Activated CD4-positive, alpha-beta memory T cell treated with anti-CD3 and anti-CD28 coated beads for 36 hours (primary cell): ENCODE measurements at regions of chr12 and their contacts with region 1.

Region 1: DNA sequence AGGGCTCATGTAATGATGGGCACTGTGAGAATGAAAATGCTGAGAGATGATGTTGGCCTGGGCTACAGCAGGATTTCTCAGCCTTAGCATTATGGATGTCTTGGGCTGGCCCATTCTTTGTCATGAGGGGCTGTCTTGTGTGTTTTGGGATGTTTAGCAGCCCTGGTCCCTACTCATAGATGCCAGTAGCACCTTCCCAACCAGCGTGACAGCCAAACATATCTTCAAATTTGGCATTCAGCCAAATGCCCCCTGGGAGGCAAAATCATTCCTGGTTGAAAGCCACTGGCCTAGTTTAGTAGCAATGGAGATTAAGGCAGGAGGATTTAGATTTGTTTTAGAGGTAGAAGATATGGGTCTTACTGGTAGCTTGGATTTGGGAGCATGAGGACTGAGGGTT is 26.6 kb downstream of the UBE3B start:
- DNase-seq: no peak
- H3K4me3 Mint-ChIP-seq: no peak overlapping the region
- H3K27ac Mint-ChIP-seq: no peak overlapping the region
- H3K4me1 Mint-ChIP-seq: no peaks in the 10 kb centered on the region
- H3K27me3 Mint-ChIP-seq: no peaks in the 10 kb centered on the region

Region 2: DNA sequence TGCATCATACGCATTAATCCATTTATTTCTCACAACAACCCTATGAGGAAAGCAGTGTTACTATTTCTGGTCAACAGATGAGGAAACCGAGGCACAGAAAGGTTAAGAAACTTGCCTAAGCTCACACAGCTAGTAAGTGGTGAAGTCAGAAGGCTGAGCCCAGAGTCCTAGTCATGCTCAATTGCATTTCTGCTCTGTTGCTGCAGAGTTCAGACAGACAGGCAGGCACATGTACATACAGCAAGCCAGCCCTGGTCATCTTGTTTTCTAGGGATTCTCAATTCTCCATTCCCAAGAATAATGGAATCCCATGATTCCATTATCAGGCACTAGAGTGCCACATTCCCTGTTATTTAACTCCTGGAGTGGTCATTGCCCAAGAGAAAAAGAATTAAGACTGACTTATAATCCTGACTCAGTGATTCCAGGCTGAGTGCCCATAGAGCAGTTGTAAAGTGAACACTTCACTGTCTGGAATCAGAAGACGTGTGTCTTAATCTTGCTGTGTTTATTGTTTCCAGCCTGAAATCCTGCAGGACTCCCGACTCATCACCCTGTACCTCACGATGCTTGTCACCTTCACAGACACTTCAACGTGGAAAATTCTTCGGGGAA is 15.9 kb before region 1 on chr12:
- CTCF ChIA-PET with region 1: no interaction called
- POLR2A ChIA-PET with region 1: no interaction called
- intact Hi-C with region 1: no loop called
- DNase-seq: no peak
- H3K4me3 Mint-ChIP-seq: no peak overlapping the region
- H3K27ac Mint-ChIP-seq: no peak overlapping the region
- H3K4me1 Mint-ChIP-seq: no peaks in the 10 kb centered on the region
- H3K27me3 Mint-ChIP-seq: no peaks in the 10 kb centered on the region

Region 3: DNA sequence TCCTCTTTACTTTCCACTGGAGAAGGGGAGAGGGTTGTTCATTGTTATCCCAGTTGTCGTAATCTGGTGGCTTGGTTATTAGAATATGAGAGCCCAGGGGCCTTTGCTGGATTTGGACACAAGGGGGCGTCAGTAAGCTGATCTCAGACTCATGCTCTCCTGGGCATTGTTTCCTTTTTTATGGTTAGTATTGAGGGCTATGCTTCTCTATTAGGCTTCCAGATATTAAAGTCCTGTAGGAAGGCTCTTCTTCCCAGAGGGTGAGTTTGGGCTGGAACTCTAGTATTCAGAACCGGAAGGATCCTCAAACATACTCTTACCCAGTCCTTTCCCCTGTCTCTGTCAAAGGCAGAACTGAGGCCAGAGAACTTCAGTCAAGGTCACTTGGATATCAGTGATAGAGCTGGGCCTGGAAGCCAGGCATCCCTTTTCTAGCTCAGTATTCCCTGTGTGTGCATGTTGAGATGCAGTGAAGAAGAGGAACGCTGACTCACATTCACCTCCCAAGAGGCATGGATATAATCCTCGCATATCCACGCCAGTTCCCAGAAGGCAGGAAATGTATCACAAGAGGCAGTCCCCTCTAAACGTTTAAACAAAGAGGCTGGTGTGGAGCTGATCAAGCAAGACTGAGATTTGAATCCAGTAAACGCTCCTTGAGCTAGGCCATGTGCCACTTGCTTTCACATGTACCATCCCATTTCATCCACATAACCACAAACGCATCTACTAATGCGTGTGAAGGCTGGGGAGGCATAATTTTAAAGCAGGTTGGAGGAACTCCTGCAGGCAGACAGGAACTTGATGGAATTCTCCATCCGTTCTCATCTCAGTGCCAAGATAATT is 15.0 kb after region 1 on chr12:
- CTCF ChIA-PET with region 1: interaction called, 16 read pairs
- POLR2A ChIA-PET with region 1: no interaction called
- intact Hi-C with region 1: no loop called
- DNase-seq: peak; percentile 60
- H3K4me3 Mint-ChIP-seq: no peak overlapping the region
- H3K27ac Mint-ChIP-seq: no peak overlapping the region
- H3K4me1 Mint-ChIP-seq: no peaks in the 10 kb centered on the region
- H3K27me3 Mint-ChIP-seq: no peaks in the 10 kb centered on the region